ENCODE measurements at regions of chr7 and their contacts with region 1.

Region 1: DNA sequence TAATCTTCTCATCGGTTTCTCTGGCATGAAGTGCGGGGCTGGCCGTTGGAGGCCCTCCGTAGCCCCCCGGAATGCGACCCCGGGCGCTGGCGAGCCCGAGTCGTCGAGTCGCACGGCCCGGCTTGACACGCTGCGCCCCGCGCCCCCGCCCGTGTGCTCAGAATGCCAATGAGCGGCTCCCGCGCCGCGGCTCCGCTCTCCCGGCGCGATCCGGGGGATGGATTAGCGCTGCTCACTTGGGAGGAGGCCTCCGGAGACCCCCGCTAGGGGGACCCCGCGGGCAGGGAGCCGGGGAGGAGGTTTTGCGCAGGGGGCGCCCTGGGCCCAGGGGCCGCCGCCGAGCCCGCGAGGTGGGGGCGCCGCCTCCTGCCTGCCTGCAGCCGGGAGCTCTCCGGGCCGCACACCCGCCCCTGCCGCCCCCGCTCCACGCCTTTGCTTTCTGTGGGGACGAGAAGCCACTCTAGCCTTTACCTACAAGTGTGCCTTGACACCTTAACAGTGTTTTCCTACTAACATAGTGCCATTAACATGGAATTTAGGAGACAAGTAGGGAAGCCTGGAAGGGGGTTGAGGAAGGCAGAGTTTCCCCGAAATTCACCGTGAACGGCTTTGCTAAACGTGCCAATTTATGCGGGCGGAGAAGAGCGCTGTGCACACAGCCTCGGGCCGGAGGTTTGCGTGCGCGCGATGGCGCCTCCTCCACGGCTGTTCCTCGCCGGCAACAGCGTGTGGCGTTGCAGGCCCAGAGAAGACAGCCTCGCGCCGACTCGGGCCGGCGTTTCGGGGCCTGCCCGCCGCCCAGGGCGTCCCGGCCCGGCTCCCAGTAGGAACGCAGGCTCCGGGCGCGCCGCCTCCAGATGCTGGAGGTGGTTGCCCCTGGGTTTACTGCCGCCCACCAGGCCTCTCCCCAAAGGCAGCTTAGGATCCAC is 7.1 kb downstream of the SHH start:
- DNase-seq: peak; percentile 66
- ATAC-seq: peak; percentile 80
- H3K4me3 Mint-ChIP-seq: peak overlapping the region; percentile 58
- H3K27ac Mint-ChIP-seq: no peak overlapping the region
- H3K4me1 Mint-ChIP-seq: peaks cover 24% of the 10 kb centered on the region
- H3K27me3 Mint-ChIP-seq: peaks cover 57% of the 10 kb centered on the region
- CTCF ChIP-seq: peak; percentile 64

Region 2: GRCh38 chr7:156816943-156817572 is 1011.9 kb after region 1 on chr7:
- CTCF ChIA-PET with region 1: no interaction called
- POLR2A ChIA-PET with region 1: no interaction called
- intact Hi-C with region 1: loop called (anchors 10 kb)
- DNase-seq: no peak
- ATAC-seq: no peak
- H3K4me3 Mint-ChIP-seq: no peak overlapping the region
- H3K27ac Mint-ChIP-seq: no peak overlapping the region
- H3K4me1 Mint-ChIP-seq: no peaks in the 10 kb centered on the region
- H3K27me3 Mint-ChIP-seq: no peaks in the 10 kb centered on the region
- CTCF ChIP-seq: peak; percentile 75

Region 3: GRCh38 chr7:157010588-157011332 is 1205.6 kb after region 1 on chr7 and contains the start of gene MNX1:
- CTCF ChIA-PET with region 1: no interaction called
- POLR2A ChIA-PET with region 1: no interaction called
- intact Hi-C with region 1: loop called (anchors 10 kb)
- DNase-seq: peak; percentile 63
- ATAC-seq: peak; percentile 79
- H3K4me3 Mint-ChIP-seq: peak within 1 kb of the TSS; percentile 19
- H3K27ac Mint-ChIP-seq: no peak within 1 kb of the TSS
- H3K4me1 Mint-ChIP-seq: peaks cover 9% of the 10 kb centered on the region
- H3K27me3 Mint-ChIP-seq: peaks cover 77% of the 10 kb centered on the region
- CTCF ChIP-seq: no peak
- total RNA-seq, gene MNX1: not detected

Measured in activated CD8-positive, alpha-beta T cell treated with anti-CD3 and anti-CD28 coated beads for 36 hours (primary cell).